ENCODE measurements at regions of chr11 and their contacts with region 1.

Region 1: GRCh38 chr11:72112321-72113219 is at the start of gene ANAPC15:
- DNase-seq: peak; percentile 98
- total RNA-seq, gene ANAPC15: 46.4 TPM

Region 2: DNA sequence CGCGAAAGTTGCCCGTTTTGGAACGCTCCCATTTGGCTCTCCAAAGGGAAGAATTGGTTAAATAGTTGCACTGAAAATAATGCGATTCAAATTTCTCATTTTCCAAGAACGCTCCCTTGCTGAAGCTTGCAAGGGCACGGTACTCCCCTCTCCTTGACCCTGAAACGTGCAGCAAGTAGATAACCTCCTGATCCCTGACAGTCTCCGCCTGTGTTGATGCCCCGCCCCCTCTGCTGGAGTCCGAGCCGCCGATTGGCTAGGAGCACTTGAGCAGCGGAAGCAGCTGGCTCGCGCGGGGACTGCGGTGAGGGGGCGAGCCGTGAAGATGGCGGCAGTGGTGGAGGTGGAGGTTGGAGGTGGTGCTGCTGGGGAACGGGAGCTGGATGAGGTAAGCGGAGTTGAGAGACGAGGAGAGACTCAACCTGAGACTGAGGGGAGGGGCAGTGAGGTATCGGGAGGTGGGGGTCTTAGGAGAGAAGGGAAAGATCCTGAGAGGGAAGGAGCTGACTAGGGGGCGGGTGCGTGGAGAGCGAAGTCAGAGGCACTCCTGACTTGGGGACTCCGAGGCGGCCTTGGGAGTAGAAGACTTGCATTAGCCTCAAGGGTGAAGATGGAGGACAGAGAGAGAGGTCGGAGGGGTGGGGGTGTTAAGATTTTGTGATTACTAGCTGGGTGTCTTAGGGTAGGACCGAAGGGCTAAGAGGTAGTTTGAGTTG is 183.7 kb before region 1 on chr11 and contains the start of gene RNF121:
- intact Hi-C with region 1: loop called (anchors 2 kb)
- DNase-seq: peak; percentile 98
- total RNA-seq, gene RNF121: 18.4 TPM

Region 3: GRCh38 chr11:72040726-72041441 is 71.7 kb before region 1 on chr11:
- intact Hi-C with region 1: loop called (anchors 2 kb)
- DNase-seq: peak; percentile 95

Region 4: DNA sequence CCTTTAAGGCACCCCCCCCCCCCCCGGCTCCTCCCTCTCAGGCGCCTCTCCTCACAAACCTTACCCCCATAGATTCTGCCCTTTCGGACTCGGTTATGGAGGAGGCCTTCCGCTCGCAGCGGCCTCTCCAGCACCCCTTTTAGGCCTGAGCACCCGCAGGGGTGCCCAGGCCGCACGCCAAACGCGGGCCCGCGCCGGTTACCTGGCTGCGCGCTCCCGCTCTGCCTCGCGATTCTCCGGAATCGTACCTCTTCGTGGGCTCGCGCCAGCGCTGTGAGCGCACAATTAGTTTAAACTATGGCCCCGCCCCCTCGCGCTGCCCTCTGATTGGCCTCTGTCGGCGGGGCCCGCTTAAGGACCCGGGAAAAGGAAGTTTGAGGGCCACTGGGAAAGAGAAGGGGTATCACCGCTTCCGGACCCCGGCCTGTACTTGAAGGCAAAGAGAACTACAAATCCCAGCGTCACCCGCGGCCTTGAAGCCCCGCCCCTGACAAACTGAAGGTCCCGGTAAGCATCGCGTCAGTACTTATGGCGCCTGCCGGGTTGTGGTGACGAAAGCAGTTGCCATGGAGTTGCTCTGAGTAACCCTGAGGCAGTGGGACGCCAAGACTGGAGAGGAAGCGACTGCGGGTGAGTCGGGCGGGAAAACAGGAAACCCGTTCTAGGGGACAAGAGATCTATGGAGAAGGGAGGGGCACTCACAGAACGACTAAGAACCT is 32.2 kb before region 1 on chr11 and contains the starts of genes LRRC51 and NUMA1:
- intact Hi-C with region 1: loop called (anchors 2 kb)
- DNase-seq: peak; percentile 100
- total RNA-seq, gene LRRC51: 4.2 TPM
- total RNA-seq, gene NUMA1: 86.0 TPM

Region 5: GRCh38 chr11:72222907-72223614 is 110.5 kb after region 1 on chr11:
- intact Hi-C with region 1: loop called (anchors 2 kb)
- DNase-seq: peak; percentile 97

Region 6: GRCh38 chr11:72430741-72431570 is 318.4 kb after region 1 on chr11:
- intact Hi-C with region 1: loop called (anchors 10 kb)
- DNase-seq: no peak

Region 7: GRCh38 chr11:72799441-72799840 is 686.9 kb after region 1 on chr11:
- intact Hi-C with region 1: no loop called
- DNase-seq: no peak

Measured in cardiac septum (tissue), 1 donor.